Activated naive CD4-positive, alpha-beta T cell treated with anti-CD3 and anti-CD28 coated beads for 36 hours (primary cell): ENCODE measurements at regions of chr5 and their contacts with region 1.

Region 1: GRCh38 chr5:119070828-119071572 is at the start of gene DMXL1:
- DNase-seq: peak; percentile 100
- H3K4me3 Mint-ChIP-seq: peak within 1 kb of the TSS; percentile 95
- H3K27ac Mint-ChIP-seq: peak within 1 kb of the TSS; percentile 97
- H3K4me1 Mint-ChIP-seq: peaks cover 38% of the 10 kb centered on the region
- H3K27me3 Mint-ChIP-seq: peaks cover 2% of the 10 kb centered on the region
- total RNA-seq, gene DMXL1: 16.4 to 18.0 TPM

Region 2: GRCh38 chr5:119309326-119309725 is 238.3 kb after region 1 on chr5:
- CTCF ChIA-PET with region 1: no interaction called
- intact Hi-C with region 1: loop called (anchors 2 kb)
- DNase-seq: no peak
- H3K4me3 Mint-ChIP-seq: peak overlapping the region; percentile 21
- H3K27ac Mint-ChIP-seq: peak overlapping the region; percentile 95
- H3K4me1 Mint-ChIP-seq: peaks cover 96% of the 10 kb centered on the region
- H3K27me3 Mint-ChIP-seq: no peaks in the 10 kb centered on the region

Region 3: GRCh38 chr5:119340597-119341218 is 269.7 kb after region 1 on chr5:
- CTCF ChIA-PET with region 1: no interaction called
- intact Hi-C with region 1: loop called (anchors 2 kb)
- DNase-seq: peak; percentile 68
- H3K4me3 Mint-ChIP-seq: peak overlapping the region; percentile 69
- H3K27ac Mint-ChIP-seq: peak overlapping the region; percentile 96
- H3K4me1 Mint-ChIP-seq: peaks cover 93% of the 10 kb centered on the region
- H3K27me3 Mint-ChIP-seq: no peaks in the 10 kb centered on the region

Region 4: DNA sequence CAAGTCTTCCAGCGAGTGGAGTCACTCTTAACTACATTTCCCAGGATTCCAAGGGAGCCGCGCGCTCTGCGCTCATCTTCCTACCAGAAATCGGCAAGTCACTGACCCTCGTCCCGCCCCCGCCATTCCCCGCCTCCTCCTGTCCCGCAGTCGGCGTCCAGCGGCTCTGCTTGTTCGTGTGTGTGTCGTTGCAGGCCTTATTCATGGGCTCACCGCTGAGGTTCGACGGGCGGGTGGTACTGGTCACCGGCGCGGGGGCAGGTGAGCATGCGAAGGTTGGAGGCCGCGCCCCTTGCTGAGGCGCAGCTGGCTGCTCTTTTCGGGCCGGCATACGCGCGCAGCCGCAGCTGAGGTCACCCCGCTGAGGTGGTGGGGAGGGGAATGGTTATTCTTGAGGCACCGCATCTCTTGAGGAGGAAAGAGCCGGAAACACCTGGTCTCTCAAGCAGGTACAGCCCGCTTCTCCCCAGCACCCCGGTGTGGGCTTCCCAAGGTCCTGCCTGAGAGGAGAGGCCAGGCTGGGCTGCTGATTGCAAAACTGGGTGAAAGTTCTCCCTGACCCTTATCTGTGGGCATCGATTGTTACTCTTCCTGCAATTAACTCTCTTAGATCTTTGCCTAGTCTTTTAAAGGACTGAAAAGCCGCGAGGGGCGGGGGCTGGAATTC is 381.5 kb after region 1 on chr5 and contains the start of gene HSD17B4:
- CTCF ChIA-PET with region 1: interaction called, 3 read pairs
- intact Hi-C with region 1: loop called (anchors 1 kb)
- DNase-seq: peak; percentile 89
- H3K4me3 Mint-ChIP-seq: peak within 1 kb of the TSS; percentile 88
- H3K27ac Mint-ChIP-seq: peak within 1 kb of the TSS; percentile 80
- H3K4me1 Mint-ChIP-seq: peaks cover 18% of the 10 kb centered on the region
- H3K27me3 Mint-ChIP-seq: no peaks in the 10 kb centered on the region
- total RNA-seq, gene HSD17B4: 85.6 to 96.3 TPM